HEK293T (cell line): ENCODE measurements at regions of chrX and their contacts with region 1.

Region 1: GRCh38 chrX:154411322-154411980 is at the start of gene TAFAZZIN:
- DNase-seq: peak; percentile 88

Region 2: GRCh38 chrX:154327038-154327820 is 84.2 kb before region 1 on chrX:
- CTCF ChIA-PET with region 1: no interaction called
- POLR2A ChIA-PET with region 1: no interaction called
- DNase-seq: no peak

Region 3: DNA sequence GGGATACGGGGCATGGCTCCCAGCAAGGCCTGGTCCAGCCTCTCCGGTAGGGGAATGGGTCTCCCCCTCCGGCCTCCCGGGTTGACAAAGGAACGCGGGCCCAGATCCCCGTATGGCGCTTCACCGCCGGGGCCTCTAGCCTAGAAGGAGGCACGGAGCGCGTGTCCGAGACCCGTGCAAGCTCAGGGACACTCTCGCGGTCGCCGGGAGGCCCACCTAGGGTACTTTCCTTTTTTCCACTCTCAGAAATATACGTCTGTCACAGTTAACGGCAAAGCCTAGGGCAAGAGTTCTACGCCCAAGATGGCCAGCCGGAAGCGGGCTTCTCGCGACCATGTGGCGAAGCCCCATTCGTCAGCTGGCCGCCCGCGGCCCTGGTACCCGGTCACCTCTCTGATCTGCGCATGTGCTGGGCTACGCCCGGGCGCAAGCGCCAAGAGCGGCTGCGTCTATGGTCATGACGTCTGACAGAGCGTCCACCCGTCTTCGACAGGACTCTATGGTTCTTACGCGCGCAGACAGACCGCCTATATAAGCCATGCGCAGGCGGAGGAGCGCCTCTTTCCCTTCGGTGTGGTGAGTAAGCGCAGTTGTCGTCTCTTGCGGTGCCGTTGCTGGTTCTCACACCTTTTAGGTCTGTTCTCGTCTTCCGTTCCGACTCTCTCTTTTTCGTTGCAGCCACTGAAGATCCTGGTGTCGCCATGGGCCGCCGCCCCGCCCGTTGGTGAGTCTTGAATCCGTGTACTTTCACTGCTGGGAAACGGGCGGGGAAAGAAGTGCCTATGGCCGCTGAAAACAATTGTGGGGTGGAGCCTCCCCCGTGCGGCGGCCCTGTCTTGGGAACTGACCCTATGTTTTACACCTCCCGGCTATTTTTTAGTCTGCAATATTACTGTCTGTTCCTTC is 13.4 kb before region 1 on chrX and contains the start of gene RPL10:
- CTCF ChIA-PET with region 1: interaction called, 8 read pairs
- POLR2A ChIA-PET with region 1: interaction called, 40 read pairs
- DNase-seq: peak; percentile 97

Region 4: DNA sequence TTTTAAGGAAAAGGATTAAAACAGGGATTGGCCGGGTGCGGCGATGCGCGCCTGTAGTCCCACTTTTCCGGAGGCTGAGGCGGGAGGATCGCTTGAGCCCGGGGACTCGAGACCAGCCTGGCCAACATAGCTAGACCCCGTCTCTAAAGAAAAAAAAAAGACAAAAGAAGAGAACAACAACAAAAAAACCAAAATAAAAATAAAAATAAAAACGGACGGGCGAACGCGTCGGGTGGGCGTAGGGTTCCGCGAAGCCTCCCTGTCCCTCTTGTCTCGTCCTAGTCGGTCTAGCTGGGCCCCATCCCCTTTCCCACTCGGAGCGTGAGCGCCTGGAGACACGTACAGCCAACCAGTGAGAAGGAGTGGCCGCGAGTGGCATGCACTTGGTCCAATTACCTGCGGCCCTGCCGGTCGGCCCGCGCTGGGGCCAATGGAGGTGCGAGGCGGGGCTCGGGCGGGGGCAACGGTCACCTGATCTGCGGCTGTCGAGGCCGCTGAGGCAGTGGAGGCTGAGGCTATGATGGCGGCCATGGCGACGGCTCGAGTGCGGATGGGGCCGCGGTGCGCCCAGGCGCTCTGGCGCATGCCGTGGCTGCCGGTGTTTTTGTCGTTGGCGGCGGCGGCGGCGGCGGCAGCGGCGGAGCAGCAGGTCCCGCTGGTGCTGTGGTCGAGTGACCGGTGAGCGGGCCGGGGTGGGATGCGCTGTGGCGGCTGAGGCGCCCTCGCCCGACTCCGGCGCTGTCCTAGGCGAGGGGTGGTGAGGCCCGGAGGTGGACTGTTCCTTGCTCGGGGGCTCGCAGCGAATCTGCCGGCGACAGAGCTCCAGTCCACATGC is 16.9 kb after region 1 on chrX and contains the start of gene ATP6AP1:
- CTCF ChIA-PET with region 1: interaction called, 4 read pairs
- POLR2A ChIA-PET with region 1: interaction called, 14 read pairs
- DNase-seq: peak; percentile 95